K562 (cell line): ENCODE measurements at regions of chr12 and their contacts with region 1.

Region 1: DNA sequence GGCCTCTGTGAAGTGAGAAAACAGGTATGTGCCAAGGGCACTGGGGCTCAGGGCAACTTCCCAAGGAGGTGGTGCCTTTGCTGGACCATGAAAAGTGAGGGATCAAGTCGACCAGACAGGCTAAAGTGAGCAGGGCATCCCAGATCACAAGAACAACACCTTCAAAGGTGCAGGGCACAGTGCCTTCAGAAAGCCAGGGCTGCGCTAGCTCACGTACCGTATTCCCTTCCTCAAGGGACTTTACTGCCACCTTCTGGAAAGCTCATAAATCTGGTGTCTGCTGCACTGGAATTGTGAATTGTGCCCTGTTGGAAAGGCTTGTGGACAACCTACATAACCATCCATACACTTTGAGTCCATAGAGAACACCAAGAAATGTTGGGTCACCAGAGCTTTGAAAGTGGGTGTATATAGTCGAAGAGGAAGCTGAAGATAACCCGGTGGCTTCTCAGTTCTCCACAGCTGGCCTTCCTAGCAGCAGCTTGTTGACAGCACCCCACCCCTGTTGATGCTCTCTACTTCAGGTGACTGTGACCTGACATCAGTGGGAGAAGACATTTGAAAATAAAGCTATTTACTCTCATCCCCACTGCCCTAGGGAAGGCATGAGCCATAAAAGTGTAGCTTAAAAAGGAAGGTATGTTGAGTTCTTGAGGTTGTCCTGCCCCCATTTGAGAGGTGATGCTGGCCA is 24.5 kb downstream of the FIGNL2 start:
- DNase-seq: peak in 2 of 4 experiments; percentile 48 to 69
- ATAC-seq: peak; percentile 86
- H3K4me3 ChIP-seq: no peak overlapping the region
- H3K27ac ChIP-seq: no peak overlapping the region
- H3K4me1 ChIP-seq: peaks cover 12 to 23% of the 10 kb centered on the region in 2 experiments; a peak in 4 of 5 replicates
- H3K27me3 ChIP-seq: peaks cover 5 to 57% of the 10 kb centered on the region in 2 experiments; a peak in 4 of 5 replicates
- CTCF ChIP-seq: peak; percentile 70 to 76 (median 74)
- EP300 ChIP-seq: no peak
- POLR2A ChIP-seq: no peak
- RAD21 ChIP-seq: peak; percentile 43 to 69

Region 2: GRCh38 chr12:51531978-51532497 is 292.0 kb before region 1 on chr12:
- CTCF ChIA-PET with region 1: no interaction called
- POLR2A ChIA-PET with region 1: no interaction called
- in situ Hi-C with region 1: no loop called
- intact Hi-C with region 1: loop called (anchors 10 kb)
- DNase-seq: peak; percentile 75 to 80 (median 80)
- ATAC-seq: peak; percentile 97
- H3K4me3 ChIP-seq: no peak overlapping the region
- H3K27ac ChIP-seq: no peak overlapping the region
- H3K4me1 ChIP-seq: no peaks in the 10 kb centered on the region
- H3K27me3 ChIP-seq: peaks cover 5 to 36% of the 10 kb centered on the region in 2 experiments; a peak in 3 of 5 replicates
- CTCF ChIP-seq: peak; percentile 85 to 88 (median 85)
- EP300 ChIP-seq: no peak
- POLR2A ChIP-seq: no peak
- RAD21 ChIP-seq: peak; percentile 69 to 84

Region 3: GRCh38 chr12:51879102-51879501 is 55.1 kb after region 1 on chr12:
- CTCF ChIA-PET with region 1: no interaction called
- POLR2A ChIA-PET with region 1: interaction called, 3 read pairs
- in situ Hi-C with region 1: no loop called
- intact Hi-C with region 1: loop called (anchors 5 kb)
- DNase-seq: peak in 1 of 4 experiments; percentile 4
- ATAC-seq: no peak
- H3K4me3 ChIP-seq: no peak overlapping the region
- H3K27ac ChIP-seq: no peak overlapping the region
- H3K4me1 ChIP-seq: peaks cover 0 to 8% of the 10 kb centered on the region in 2 experiments; a peak in 3 of 5 replicates
- H3K27me3 ChIP-seq: no peaks in the 10 kb centered on the region
- CTCF ChIP-seq: no peak
- EP300 ChIP-seq: no peak
- POLR2A ChIP-seq: no peak
- RAD21 ChIP-seq: no peak